K562 (cell line): ENCODE measurements at regions of chr1 and their contacts with region 1.

Region 1: DNA sequence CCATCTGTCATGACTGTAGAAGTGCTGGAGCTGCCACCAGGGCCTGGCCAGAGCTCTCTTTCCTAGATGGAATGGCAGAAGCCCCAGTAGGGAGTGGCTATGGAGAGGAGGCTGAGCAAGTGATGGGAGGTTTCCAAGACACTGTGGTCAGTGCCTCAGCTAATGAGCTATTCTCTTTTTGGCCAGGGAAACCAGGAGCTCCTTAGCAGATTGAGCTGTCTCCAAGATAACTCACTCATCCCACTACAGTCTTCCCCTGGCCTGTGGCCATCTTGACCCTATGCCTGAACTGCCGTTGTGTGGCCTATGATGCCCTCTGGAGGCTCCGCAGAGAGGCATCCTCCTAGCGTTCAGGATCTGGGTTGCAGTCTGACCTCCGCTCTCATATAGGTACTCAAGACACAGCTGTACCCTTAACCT is 60.5 kb downstream of the ERI3 start:
- DNase-seq: peak; percentile 68 to 79 (median 74)
- ATAC-seq: peak; percentile 90
- H3K4me3 ChIP-seq: no peak overlapping the region
- H3K27ac ChIP-seq: no peak overlapping the region
- H3K4me1 ChIP-seq: peaks cover 28 to 36% of the 10 kb centered on the region in 2 experiments
- H3K27me3 ChIP-seq: no peaks in the 10 kb centered on the region
- CTCF ChIP-seq: peak; percentile 93 to 99 (median 99)
- EP300 ChIP-seq: no peak
- POLR2A ChIP-seq: no peak
- RAD21 ChIP-seq: peak; percentile 80 to 97

Region 2: GRCh38 chr1:43991476-43992231 is 302.9 kb before region 1 on chr1 and contains the start of gene CCDC24:
- CTCF ChIA-PET with region 1: no interaction called
- POLR2A ChIA-PET with region 1: no interaction called
- in situ Hi-C with region 1: no loop called
- intact Hi-C with region 1: loop called (anchors 10 kb)
- DNase-seq: peak; percentile 89 to 94 (median 92)
- ATAC-seq: peak; percentile 81
- H3K4me3 ChIP-seq: peak within 1 kb of the TSS; percentile 74
- H3K27ac ChIP-seq: peak within 1 kb of the TSS; percentile 51
- H3K4me1 ChIP-seq: peaks cover 15 to 44% of the 10 kb centered on the region in 2 experiments; a peak in 4 of 5 replicates
- H3K27me3 ChIP-seq: no peaks in the 10 kb centered on the region
- CTCF ChIP-seq: peak in 1 of 3 experiments; percentile 13; a peak in 1 of 6 replicates
- EP300 ChIP-seq: no peak
- POLR2A ChIP-seq: peak; percentile 82
- RAD21 ChIP-seq: peak in 1 of 2 experiments; percentile 9; a peak in 2 of 4 replicates
- polyA plus RNA-seq, gene CCDC24: 0.31 to 0.64 TPM

Region 3: GRCh38 chr1:44089371-44090049 is 205.1 kb before region 1 on chr1:
- CTCF ChIA-PET with region 1: interaction called, 6 read pairs
- POLR2A ChIA-PET with region 1: no interaction called
- in situ Hi-C with region 1: loop called (anchors 10 kb)
- intact Hi-C with region 1: loop called (anchors 1 kb)
- DNase-seq: peak in 1 of 4 experiments; percentile 46
- ATAC-seq: peak; percentile 56
- H3K4me3 ChIP-seq: no peak overlapping the region
- H3K27ac ChIP-seq: no peak overlapping the region
- H3K4me1 ChIP-seq: peaks cover 3 to 19% of the 10 kb centered on the region in 2 experiments; a peak in 3 of 5 replicates
- H3K27me3 ChIP-seq: no peaks in the 10 kb centered on the region; a peak in 1 of 5 replicates
- CTCF ChIP-seq: no peak
- EP300 ChIP-seq: no peak
- POLR2A ChIP-seq: no peak
- RAD21 ChIP-seq: no peak

Region 4: GRCh38 chr1:44103270-44104131 is 191.1 kb before region 1 on chr1:
- CTCF ChIA-PET with region 1: no interaction called
- POLR2A ChIA-PET with region 1: no interaction called
- in situ Hi-C with region 1: loop called (anchors 10 kb)
- intact Hi-C with region 1: loop called (anchors 1 kb)
- DNase-seq: peak in 2 of 4 experiments; percentile 39 to 84
- ATAC-seq: peak; percentile 79
- H3K4me3 ChIP-seq: 0 out of 2 replicates have a peak overlapping the region, but pooled peaks have one; percentile 12
- H3K27ac ChIP-seq: no peak overlapping the region
- H3K4me1 ChIP-seq: peaks cover 4 to 12% of the 10 kb centered on the region in 2 experiments; a peak in 3 of 5 replicates
- H3K27me3 ChIP-seq: peaks cover 20 to 35% of the 10 kb centered on the region in 2 experiments
- CTCF ChIP-seq: peak; percentile 70 to 81 (median 80)
- EP300 ChIP-seq: no peak
- POLR2A ChIP-seq: no peak
- RAD21 ChIP-seq: peak in 1 of 2 experiments; percentile 63; a peak in 2 of 4 replicates

Region 5: GRCh38 chr1:44213222-44214112 is 81.1 kb before region 1 on chr1 and contains the start of gene DMAP1:
- CTCF ChIA-PET with region 1: interaction called, 18 read pairs
- POLR2A ChIA-PET with region 1: interaction called, 8 read pairs
- in situ Hi-C with region 1: loop called (anchors 5 kb)
- intact Hi-C with region 1: loop called (anchors 1 kb)
- DNase-seq: peak; percentile 84 to 92 (median 90)
- ATAC-seq: peak; percentile 93
- H3K4me3 ChIP-seq: peak within 1 kb of the TSS; percentile 55
- H3K27ac ChIP-seq: peak within 1 kb of the TSS; percentile 53; the same call in 2 of the 3 replicates
- H3K4me1 ChIP-seq: peaks cover 7 to 10% of the 10 kb centered on the region in 2 experiments; a peak in 4 of 5 replicates
- H3K27me3 ChIP-seq: 0 out of 5 replicates have a peak, but pooled peaks cover 0 to 1% of the 10 kb centered on the region in 2 experiments
- CTCF ChIP-seq: peak in 2 of 3 experiments; percentile 28 to 39; a peak in 4 of 6 replicates
- EP300 ChIP-seq: peak; percentile 27; the same call in 1 of the 2 replicates
- POLR2A ChIP-seq: peak; percentile 77
- RAD21 ChIP-seq: peak; percentile 41 to 56; a peak in 3 of 4 replicates
- polyA plus RNA-seq, gene DMAP1: 1.5 to 4.0 TPM

Region 6: DNA sequence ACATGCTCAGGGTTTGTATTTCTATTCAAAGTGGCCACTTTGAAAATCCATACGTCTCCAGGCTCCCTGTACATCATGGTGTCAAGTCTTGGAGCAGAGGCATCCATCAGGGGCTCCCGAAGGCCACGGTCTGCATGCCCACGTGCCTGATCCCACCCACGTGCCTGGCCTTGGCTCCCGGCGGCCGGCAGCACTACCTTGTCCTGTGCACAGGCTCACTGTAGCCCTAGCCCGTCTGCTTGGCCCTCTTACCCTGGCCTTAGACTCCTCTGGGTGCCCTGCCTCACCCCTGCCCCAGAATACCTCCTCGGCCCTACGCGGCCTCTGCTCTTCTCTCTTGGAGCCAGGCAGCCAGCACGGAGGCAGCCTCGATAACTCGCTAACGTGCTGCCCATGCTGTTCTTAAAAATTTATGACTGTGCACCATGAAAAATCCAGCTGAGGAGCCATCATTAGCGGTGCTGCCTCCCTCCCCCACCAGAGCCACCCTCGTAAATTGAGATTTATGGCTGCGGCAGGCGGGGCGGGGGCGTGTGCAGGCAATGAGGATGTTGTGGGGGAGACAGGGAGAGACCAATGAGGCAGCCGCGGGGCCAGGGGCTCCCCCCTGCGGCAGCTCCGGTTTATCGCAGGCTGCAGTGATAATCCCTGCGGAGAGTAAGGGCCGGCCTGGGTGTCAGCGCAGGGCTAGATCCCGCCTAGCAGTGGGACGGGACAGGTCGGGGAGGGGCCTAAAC is 56.7 kb before region 1 on chr1:
- CTCF ChIA-PET with region 1: no interaction called
- POLR2A ChIA-PET with region 1: interaction called, 6 read pairs
- in situ Hi-C with region 1: no loop called
- intact Hi-C with region 1: loop called (anchors 2 kb)
- DNase-seq: peak; percentile 92 to 97 (median 96)
- ATAC-seq: peak; percentile 99
- H3K4me3 ChIP-seq: no peak overlapping the region
- H3K27ac ChIP-seq: no peak overlapping the region
- H3K4me1 ChIP-seq: peaks cover 25 to 35% of the 10 kb centered on the region in 2 experiments; a peak in 4 of 5 replicates
- H3K27me3 ChIP-seq: no peaks in the 10 kb centered on the region
- CTCF ChIP-seq: peak; percentile 92 to 97 (median 94)
- EP300 ChIP-seq: peak; percentile 25; the same call in 1 of the 2 replicates
- POLR2A ChIP-seq: no peak
- RAD21 ChIP-seq: peak in 1 of 2 experiments; percentile 67; a peak in 2 of 4 replicates

Region 7: GRCh38 chr1:44485229-44485933 is 190.8 kb after region 1 on chr1:
- CTCF ChIA-PET with region 1: no interaction called
- POLR2A ChIA-PET with region 1: no interaction called
- in situ Hi-C with region 1: no loop called
- intact Hi-C with region 1: no loop called
- DNase-seq: peak; percentile 78 to 87 (median 84)
- ATAC-seq: peak; percentile 97
- H3K4me3 ChIP-seq: no peak overlapping the region
- H3K27ac ChIP-seq: no peak overlapping the region
- H3K4me1 ChIP-seq: peaks cover 5 to 16% of the 10 kb centered on the region in 2 experiments; a peak in 4 of 5 replicates
- H3K27me3 ChIP-seq: peaks cover 20 to 24% of the 10 kb centered on the region in 2 experiments
- CTCF ChIP-seq: no peak
- EP300 ChIP-seq: peak; percentile 95
- POLR2A ChIP-seq: no peak
- RAD21 ChIP-seq: 0 out of 4 replicates have a peak, but pooled peaks of 1 of the 2 experiments have one; percentile 15